Posterior vena cava (tissue), 2 donors: ENCODE measurements at regions of chr4 and their contacts with region 1.

Region 1: GRCh38 chr4:177478496-177478895 is 36.3 kb upstream of the AGA start:
- DNase-seq: no peak

Region 2: GRCh38 chr4:176292920-176293319 is 1185.6 kb before region 1 on chr4:
- intact Hi-C with region 1: loop called in 1 of 2 experiments (anchors 5 kb)
- DNase-seq: no peak

Region 3: GRCh38 chr4:177079327-177079726 is 399.2 kb before region 1 on chr4:
- intact Hi-C with region 1: loop called in 1 of 2 experiments (anchors 10 kb)
- DNase-seq: no peak